ENCODE measurements at regions of chr16 and their contacts with region 1.

Region 1: GRCh38 chr16:28924732-28925385 is at the start of gene RABEP2:
- DNase-seq: no peak
- ATAC-seq: peak; percentile 83
- H3K4me3 ChIP-seq: peak within 1 kb of the TSS; percentile 92
- H3K27ac ChIP-seq: peak within 1 kb of the TSS; percentile 99
- H3K4me1 ChIP-seq: peaks cover 14% of the 10 kb centered on the region
- H3K27me3 ChIP-seq: no peaks in the 10 kb centered on the region
- CTCF ChIP-seq: no peak
- EP300 ChIP-seq: no peak
- POLR2A ChIP-seq: peak; percentile 70
- RAD21 ChIP-seq: no peak
- polyA plus RNA-seq, gene RABEP2: 0.47 to 0.69 TPM

Region 2: DNA sequence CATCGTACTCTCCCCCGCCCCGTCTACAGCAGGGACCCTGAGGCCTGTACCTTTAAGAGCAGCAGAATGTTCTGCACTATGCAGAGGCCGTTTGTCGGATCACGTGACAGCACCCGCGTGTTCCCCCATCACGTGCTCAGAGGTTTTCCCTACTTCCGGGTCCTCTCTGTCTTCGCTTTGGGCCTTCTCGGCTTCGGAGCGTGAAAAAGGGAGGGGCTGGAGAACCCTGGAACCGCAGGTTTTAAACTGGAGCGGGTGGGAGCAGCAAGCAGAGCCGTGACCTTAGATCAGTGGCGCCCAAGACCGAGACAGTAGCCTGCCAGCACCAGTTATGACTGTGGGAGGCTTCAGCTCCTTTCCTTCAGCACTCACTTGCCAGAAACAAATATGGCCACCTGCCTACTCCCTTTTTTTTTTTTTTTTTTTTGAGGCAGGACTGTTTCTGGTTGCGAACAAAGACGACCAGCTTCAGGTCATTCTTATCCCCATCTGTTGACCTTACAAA is 432.8 kb before region 1 on chr16 and contains the start of gene CLN3:
- CTCF ChIA-PET with region 1: no interaction called
- POLR2A ChIA-PET with region 1: no interaction called
- RAD21 ChIA-PET with region 1: no interaction called
- SMC1A ChIA-PET with region 1: no interaction called
- in situ Hi-C with region 1: no loop called
- intact Hi-C with region 1: loop called (anchors 10 kb)
- DNase-seq: peak; percentile 89
- ATAC-seq: peak; percentile 87
- H3K4me3 ChIP-seq: peak within 1 kb of the TSS; percentile 91
- H3K27ac ChIP-seq: peak within 1 kb of the TSS; percentile 97
- H3K4me1 ChIP-seq: peaks cover 38% of the 10 kb centered on the region
- H3K27me3 ChIP-seq: no peaks in the 10 kb centered on the region
- CTCF ChIP-seq: no peak
- EP300 ChIP-seq: peak in 1 of 2 experiments; percentile 52; a peak in 2 of 4 replicates
- POLR2A ChIP-seq: peak; percentile 69
- RAD21 ChIP-seq: no peak
- polyA plus RNA-seq, gene CLN3: 2.3 to 2.7 TPM

Region 3: GRCh38 chr16:28846080-28846932 is 78.6 kb before region 1 on chr16 and contains the start of gene TUFM:
- CTCF ChIA-PET with region 1: interaction called, 3 read pairs
- POLR2A ChIA-PET with region 1: interaction called, 7 read pairs
- RAD21 ChIA-PET with region 1: interaction called, 13 read pairs
- SMC1A ChIA-PET with region 1: interaction called, 10 read pairs
- in situ Hi-C with region 1: no loop called
- intact Hi-C with region 1: loop called (anchors 2 kb)
- DNase-seq: peak; percentile 92
- ATAC-seq: peak; percentile 95
- H3K4me3 ChIP-seq: peak within 1 kb of the TSS; percentile 96
- H3K27ac ChIP-seq: peak within 1 kb of the TSS; percentile 81
- H3K4me1 ChIP-seq: peaks cover 9% of the 10 kb centered on the region
- H3K27me3 ChIP-seq: no peaks in the 10 kb centered on the region
- CTCF ChIP-seq: peak; percentile 75 to 97 (median 79); a peak in 5 of 6 replicates
- EP300 ChIP-seq: 0 out of 4 replicates have a peak, but pooled peaks of 1 of the 2 experiments have one; percentile 26
- POLR2A ChIP-seq: peak; percentile 93
- RAD21 ChIP-seq: 0 out of 2 replicates have a peak, but pooled peaks have one; percentile 30
- polyA plus RNA-seq, gene TUFM: 23.4 to 101 TPM

Region 4: DNA sequence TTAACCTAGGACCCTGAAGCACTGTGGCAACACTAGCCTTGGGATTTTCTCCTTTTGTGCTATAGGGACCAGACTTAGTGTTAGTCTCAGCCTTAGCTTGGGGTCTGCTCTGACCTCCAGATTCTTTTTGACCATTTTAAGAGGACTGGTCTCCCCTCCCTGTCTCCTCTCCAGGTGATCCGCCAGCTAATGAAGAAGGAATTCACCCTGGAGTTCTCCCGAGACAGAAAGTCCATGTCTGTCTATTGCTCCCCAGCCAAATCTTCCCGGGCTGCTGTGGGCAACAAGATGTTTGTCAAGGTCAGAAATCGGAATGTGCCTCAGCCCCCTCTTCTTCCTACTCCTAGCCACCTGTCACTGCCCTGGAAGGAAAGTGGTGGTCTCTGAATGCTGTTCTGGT is 27.0 kb before region 1 on chr16:
- CTCF ChIA-PET with region 1: no interaction called
- POLR2A ChIA-PET with region 1: interaction called, 6 read pairs
- RAD21 ChIA-PET with region 1: interaction called, 16 read pairs
- SMC1A ChIA-PET with region 1: interaction called, 7 read pairs
- in situ Hi-C with region 1: no loop called
- intact Hi-C with region 1: no loop called
- DNase-seq: no peak
- ATAC-seq: no peak
- H3K4me3 ChIP-seq: no peak overlapping the region
- H3K27ac ChIP-seq: no peak overlapping the region
- H3K4me1 ChIP-seq: no peaks in the 10 kb centered on the region; the same call in 1 of the 2 replicates
- H3K27me3 ChIP-seq: no peaks in the 10 kb centered on the region
- CTCF ChIP-seq: no peak
- EP300 ChIP-seq: no peak
- POLR2A ChIP-seq: no peak
- RAD21 ChIP-seq: no peak

Region 5: GRCh38 chr16:28950648-28951409 is 26.0 kb after region 1 on chr16 and contains the start of gene NFATC2IP:
- CTCF ChIA-PET with region 1: interaction called, 136 read pairs
- POLR2A ChIA-PET with region 1: interaction called, 21 read pairs
- RAD21 ChIA-PET with region 1: interaction called, 46 read pairs
- SMC1A ChIA-PET with region 1: interaction called, 58 read pairs
- in situ Hi-C with region 1: no loop called
- intact Hi-C with region 1: no loop called
- DNase-seq: peak; percentile 99
- ATAC-seq: peak; percentile 97
- H3K4me3 ChIP-seq: peak within 1 kb of the TSS; percentile 99
- H3K27ac ChIP-seq: peak within 1 kb of the TSS; percentile 86
- H3K4me1 ChIP-seq: peaks cover 5% of the 10 kb centered on the region
- H3K27me3 ChIP-seq: no peaks in the 10 kb centered on the region
- CTCF ChIP-seq: no peak
- EP300 ChIP-seq: no peak
- POLR2A ChIP-seq: peak; percentile 92
- RAD21 ChIP-seq: no peak
- polyA plus RNA-seq, gene NFATC2IP: 12.2 to 16.2 TPM

Region 6: DNA sequence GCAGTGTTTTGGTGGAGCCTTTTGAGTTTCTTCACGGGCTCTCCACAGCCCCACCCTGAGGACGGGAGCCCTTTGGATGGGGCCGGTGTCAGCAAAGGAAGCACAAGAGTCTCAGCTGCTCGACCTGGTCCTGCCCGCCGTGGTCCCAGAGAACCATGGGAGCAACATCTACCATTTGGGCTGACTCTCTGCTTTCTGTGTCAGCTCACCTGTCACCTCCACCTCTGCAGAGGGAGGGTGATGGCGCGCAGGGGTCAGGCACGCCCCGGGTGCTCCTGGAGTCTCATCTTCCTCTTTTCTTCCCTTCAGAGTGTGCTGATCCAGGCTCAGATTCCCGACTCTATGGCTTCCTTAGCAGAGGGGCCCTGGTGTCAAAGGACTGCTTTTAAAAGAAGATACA is 231.7 kb after region 1 on chr16:
- CTCF ChIA-PET with region 1: no interaction called
- POLR2A ChIA-PET with region 1: no interaction called
- RAD21 ChIA-PET with region 1: no interaction called
- SMC1A ChIA-PET with region 1: no interaction called
- in situ Hi-C with region 1: no loop called
- intact Hi-C with region 1: no loop called
- DNase-seq: no peak
- ATAC-seq: no peak
- H3K4me3 ChIP-seq: no peak overlapping the region
- H3K27ac ChIP-seq: no peak overlapping the region
- H3K4me1 ChIP-seq: no peaks in the 10 kb centered on the region
- H3K27me3 ChIP-seq: no peaks in the 10 kb centered on the region
- CTCF ChIP-seq: no peak
- EP300 ChIP-seq: no peak
- POLR2A ChIP-seq: no peak
- RAD21 ChIP-seq: no peak

Measured in GM12878 (cell line).